Activated CD4-positive, alpha-beta T cell treated with anti-CD3 and anti-CD28 coated beads, Interleukin-2, amount 10 ng/mL, durations not matched to agents 7 days and 5 days (primary cell): ENCODE measurements at regions of chr12 and their contacts with region 1.

Region 1: DNA sequence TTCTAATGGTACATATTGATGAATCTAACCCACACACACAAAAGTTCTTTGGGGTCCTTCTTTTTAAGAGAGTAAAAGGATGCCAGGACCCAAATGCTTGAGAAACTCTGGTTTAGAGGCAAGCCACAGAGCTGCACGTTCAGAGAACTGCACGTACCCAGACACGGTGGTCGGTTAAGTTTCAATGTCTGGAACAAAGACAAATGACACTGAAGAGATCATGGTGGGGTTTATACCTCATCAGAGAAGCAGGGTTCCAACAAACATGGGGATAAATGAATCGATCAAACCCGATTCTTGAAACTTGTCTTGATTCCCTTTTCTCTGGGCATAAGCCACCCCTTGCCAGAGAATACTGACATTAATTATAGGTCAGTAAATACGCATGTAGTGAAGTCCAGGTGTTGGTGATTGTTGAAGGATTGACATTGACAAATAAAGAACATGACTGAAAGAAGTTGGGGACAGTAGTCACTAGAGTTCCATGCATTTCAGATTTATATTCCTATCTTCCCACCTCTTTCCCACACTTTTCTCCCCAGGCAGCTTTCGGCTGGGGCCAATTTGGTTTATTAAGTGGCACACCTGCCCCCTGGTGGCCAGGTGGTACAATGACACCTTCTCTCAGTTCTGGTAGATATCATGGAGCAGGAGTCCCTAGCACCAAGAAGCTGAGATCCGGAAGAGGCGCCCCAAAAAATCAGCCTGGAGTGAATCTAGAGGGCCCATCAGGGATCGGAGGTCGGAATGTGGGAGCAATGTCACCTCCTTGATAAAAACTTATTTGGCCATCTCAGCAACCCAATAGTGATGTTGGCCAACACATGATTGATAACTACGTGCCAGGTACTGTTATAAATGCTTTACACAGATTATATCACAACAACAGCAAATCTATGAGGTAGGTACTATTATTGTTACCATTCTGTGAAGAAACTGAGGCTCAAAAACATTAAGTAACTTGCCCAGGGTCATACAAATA is 17.8 kb upstream of the HDAC7 start:
- DNase-seq: peak; percentile 70
- H3K4me3 Mint-ChIP-seq: no peak overlapping the region
- H3K27ac Mint-ChIP-seq: peak overlapping the region; percentile 11
- H3K4me1 Mint-ChIP-seq: peaks cover 57% of the 10 kb centered on the region
- H3K27me3 Mint-ChIP-seq: no peaks in the 10 kb centered on the region

Region 2: GRCh38 chr12:47602325-47602724 is 235.2 kb before region 1 on chr12:
- CTCF ChIA-PET with region 1: no interaction called
- POLR2A ChIA-PET with region 1: no interaction called
- DNase-seq: no peak
- H3K4me3 Mint-ChIP-seq: no peak overlapping the region
- H3K27ac Mint-ChIP-seq: no peak overlapping the region
- H3K4me1 Mint-ChIP-seq: peaks cover 2% of the 10 kb centered on the region
- H3K27me3 Mint-ChIP-seq: no peaks in the 10 kb centered on the region

Region 3: DNA sequence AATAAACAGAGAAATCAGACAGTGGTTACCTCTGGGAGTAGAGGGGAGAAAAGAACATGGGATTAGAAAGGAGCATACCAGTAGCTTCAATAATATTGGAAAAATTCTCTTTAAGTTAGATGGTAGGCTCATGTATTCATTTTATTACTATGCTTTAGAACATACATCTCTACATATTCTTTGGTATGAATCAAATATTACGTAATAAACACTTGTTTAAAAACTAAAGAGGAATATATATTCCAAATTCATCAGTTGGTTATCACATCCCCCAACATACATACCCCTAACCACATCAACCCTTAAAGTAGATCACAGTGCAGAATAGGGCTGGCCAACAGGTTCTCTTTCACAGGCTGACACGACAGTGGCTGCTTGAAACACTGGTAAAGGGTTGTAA is 137.2 kb before region 1 on chr12:
- CTCF ChIA-PET with region 1: no interaction called
- POLR2A ChIA-PET with region 1: no interaction called
- DNase-seq: no peak
- H3K4me3 Mint-ChIP-seq: no peak overlapping the region
- H3K27ac Mint-ChIP-seq: no peak overlapping the region
- H3K4me1 Mint-ChIP-seq: peaks cover 24% of the 10 kb centered on the region
- H3K27me3 Mint-ChIP-seq: no peaks in the 10 kb centered on the region

Region 4: DNA sequence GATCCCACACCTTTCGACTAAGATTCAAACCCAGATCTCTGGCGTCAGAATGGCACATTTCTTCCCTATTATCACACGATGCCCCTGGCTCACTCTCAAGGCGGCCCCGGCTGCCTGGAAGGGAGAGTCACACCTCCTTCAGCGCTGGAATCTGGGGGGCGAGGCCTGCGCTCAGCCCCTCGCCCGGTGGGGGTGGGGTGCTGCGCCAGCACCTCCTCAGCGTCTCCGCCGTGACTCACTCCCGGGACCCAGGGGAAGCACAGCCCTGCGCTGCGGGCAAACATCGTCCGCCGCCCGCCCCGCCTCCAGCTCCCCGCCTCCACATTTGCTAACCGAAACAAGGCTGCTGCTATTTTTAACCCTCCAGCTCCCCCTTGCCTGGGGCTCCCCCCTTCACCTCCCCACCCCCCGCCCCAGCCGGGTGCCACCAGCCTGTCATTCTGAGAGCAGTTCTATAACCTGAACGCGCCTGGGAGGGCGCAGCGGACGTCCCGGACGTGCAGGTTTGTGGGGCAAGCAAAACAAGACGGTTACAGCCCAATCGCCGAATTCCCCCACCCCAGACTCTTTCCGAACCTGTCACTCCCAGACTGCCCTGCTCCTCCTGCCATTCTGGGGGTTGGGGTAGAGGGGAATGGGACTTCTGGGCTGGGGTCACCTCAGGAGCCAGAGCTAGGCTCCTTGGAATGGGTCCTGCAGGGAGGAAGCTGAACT is 24.5 kb before region 1 on chr12:
- CTCF ChIA-PET with region 1: interaction called, 309 read pairs
- POLR2A ChIA-PET with region 1: interaction called, 18 read pairs
- DNase-seq: peak; percentile 95
- H3K4me3 Mint-ChIP-seq: peak overlapping the region; percentile 94
- H3K27ac Mint-ChIP-seq: peak overlapping the region; percentile 97
- H3K4me1 Mint-ChIP-seq: peaks cover 94% of the 10 kb centered on the region
- H3K27me3 Mint-ChIP-seq: no peaks in the 10 kb centered on the region

Region 5: DNA sequence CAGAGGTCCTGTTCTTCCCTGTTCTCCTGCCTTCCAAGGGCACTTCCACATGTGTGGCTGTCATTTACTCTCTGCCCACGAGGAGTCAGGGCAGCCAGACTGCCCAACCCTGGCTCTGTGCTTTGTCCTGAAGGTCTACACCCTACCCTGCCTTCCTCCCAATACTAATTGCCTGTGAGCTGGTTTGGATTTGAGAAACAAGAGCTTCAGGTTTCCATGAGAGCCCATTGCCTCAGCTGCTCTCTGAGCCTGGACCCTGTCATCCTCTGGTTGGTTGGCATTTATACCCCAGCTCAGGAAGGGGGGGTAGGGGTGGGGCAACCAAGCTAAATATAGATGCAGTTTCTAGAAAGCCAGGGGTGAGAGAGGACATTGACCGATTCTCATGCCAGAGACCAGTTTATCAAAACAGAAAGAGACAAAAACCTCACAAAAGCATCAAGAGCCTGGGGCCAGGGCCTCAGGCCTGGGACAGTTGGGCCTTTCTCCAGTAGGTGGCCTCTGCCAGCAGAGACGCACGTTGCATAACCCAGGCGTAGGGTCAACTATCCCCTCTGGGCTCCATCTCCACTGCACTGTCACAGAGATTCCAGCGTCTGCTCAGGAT is 32.8 kb after region 1 on chr12:
- CTCF ChIA-PET with region 1: interaction called, 15 read pairs
- POLR2A ChIA-PET with region 1: no interaction called
- DNase-seq: no peak
- H3K4me3 Mint-ChIP-seq: no peak overlapping the region
- H3K27ac Mint-ChIP-seq: peak overlapping the region; percentile 50
- H3K4me1 Mint-ChIP-seq: peaks cover 54% of the 10 kb centered on the region
- H3K27me3 Mint-ChIP-seq: no peaks in the 10 kb centered on the region

Region 6: DNA sequence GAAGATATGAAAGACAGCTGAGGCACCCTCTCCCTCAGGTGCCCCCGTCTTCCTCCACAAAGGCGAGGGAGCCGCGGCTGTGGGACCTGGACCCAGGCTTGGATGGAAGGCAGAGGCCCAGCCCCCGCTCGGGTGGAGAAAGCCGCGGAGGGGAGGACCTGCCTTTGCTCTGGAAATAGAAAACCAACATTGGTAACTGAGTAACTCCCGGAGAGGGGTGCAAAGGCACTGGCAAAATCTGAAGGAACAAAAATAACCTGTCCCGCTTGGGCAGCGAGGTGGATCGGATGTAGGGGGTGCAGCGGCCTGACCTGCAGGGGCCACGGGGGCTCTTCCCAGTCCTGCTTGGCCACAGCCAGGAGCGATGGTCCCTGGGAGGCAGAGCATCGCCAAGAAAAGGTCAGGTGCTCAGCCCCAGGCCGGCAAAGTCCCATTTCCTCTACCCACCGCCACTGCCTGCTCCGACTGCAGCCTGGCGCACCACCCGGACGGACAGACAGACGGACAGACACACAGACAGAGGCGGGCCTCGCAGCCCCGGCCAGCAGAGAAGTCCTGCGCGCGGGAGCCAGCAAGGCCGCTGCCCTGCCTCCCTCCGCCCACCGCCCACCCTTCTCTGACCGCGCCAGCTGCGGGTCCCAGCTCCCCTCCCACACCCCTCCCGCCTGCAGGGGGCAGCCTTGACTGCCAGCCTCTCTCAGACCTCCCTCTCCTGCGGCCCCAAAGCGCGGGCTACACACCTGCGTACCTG is 104.5 kb after region 1 on chr12:
- CTCF ChIA-PET with region 1: no interaction called
- POLR2A ChIA-PET with region 1: no interaction called
- DNase-seq: peak; percentile 22
- H3K4me3 Mint-ChIP-seq: no peak overlapping the region
- H3K27ac Mint-ChIP-seq: no peak overlapping the region
- H3K4me1 Mint-ChIP-seq: peaks cover 2% of the 10 kb centered on the region
- H3K27me3 Mint-ChIP-seq: peaks cover 13% of the 10 kb centered on the region